ENCODE measurements at regions of chr2 and their contacts with region 1.

Region 1: DNA sequence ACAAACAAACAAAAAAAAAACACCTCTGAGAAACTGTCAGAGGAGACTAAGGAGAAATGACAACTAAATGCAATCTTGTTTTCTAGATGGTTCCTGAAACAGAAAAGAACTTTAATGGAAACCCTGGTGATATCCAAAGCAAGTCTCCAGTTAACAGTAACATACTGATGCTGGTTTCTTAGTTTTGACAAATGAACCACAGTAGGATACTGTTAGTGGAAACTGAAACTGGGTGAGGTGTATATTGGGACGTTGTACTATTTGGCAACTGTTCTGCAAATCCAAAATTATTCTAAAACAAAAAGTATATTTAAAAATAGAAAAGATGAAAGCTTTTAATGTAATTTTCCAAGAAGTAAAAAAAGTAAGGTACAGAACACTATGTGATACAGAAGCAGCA is 11.4 kb downstream of the SESTD1 start:
- DNase-seq: peak; percentile 33
- ATAC-seq: peak; percentile 53
- H3K4me3 ChIP-seq: peak overlapping the region in 2 of 5 experiments; percentile 15 to 45
- H3K4me3 Mint-ChIP-seq: peak overlapping the region; percentile 70
- H3K27ac ChIP-seq: peak overlapping the region; percentile 62 to 84
- H3K27ac Mint-ChIP-seq: peak overlapping the region; percentile 85
- H3K4me1 ChIP-seq: peaks cover 67 to 80% of the 10 kb centered on the region in 2 donors
- H3K4me1 Mint-ChIP-seq: peaks cover 77% of the 10 kb centered on the region
- H3K27me3 ChIP-seq: no peaks in the 10 kb centered on the region
- H3K27me3 Mint-ChIP-seq: no peaks in the 10 kb centered on the region
- CTCF ChIP-seq: no peak

Region 2: DNA sequence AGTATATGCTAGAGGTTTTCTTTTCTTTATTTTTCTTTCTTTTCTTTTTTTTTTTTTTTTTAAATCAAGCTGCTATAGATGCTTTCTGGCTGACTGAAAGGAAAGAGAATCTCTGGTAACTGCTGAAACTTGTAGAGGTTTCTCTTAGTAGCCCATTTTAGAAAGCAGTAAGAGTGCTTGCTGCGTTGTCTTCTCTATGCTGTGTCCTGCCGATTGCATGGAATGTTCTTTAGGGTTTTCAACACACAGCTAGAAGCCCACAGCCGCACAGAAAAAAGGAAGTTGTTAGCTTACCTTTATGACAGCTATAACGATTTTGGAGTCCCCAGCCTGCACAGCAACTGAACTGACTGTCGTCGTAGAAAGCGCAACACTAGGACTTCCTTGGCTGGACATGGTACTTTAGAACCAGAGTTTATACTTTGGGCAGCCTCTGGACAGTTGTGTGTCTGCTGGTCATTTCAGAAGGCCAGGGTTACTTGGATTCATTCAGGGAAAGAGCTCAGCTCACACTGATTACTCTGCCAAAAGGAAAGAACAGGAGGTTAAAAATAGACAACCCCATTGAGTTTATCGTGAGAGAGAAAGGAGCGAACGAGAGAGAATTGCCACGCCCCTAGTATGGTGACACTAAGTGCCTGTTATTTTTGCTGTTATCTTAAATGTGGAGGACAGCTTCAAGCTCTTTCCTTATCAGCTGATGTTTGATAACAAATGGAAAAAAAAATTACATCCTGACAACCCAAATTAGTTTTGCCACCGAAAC is 203.5 kb before region 1 on chr2 and contains the start of gene CCDC141:
- CTCF ChIA-PET with region 1: no interaction called
- POLR2A ChIA-PET with region 1: no interaction called
- intact Hi-C with region 1: loop called (anchors 10 kb)
- DNase-seq: peak; percentile 72
- ATAC-seq: peak; percentile 82
- H3K4me3 ChIP-seq: peak within 1 kb of the TSS; percentile 46 to 83 (median 70)
- H3K4me3 Mint-ChIP-seq: peak within 1 kb of the TSS; percentile 94
- H3K27ac ChIP-seq: peak within 1 kb of the TSS; percentile 81 to 82
- H3K27ac Mint-ChIP-seq: peak within 1 kb of the TSS; percentile 95
- H3K4me1 ChIP-seq: peaks cover 38 to 44% of the 10 kb centered on the region in 2 donors
- H3K4me1 Mint-ChIP-seq: peaks cover 56% of the 10 kb centered on the region
- H3K27me3 ChIP-seq: no peaks in the 10 kb centered on the region
- H3K27me3 Mint-ChIP-seq: no peaks in the 10 kb centered on the region
- CTCF ChIP-seq: no peak
- total RNA-seq, gene CCDC141: 42.1 and 47.5 TPM in 2 replicates

Region 3: GRCh38 chr2:179233083-179233490 is 20.1 kb before region 1 on chr2:
- CTCF ChIA-PET with region 1: no interaction called
- POLR2A ChIA-PET with region 1: no interaction called
- intact Hi-C with region 1: loop called (anchors 2 kb)
- DNase-seq: peak; percentile 0
- ATAC-seq: no peak
- H3K4me3 ChIP-seq: no peak overlapping the region
- H3K4me3 Mint-ChIP-seq: no peak overlapping the region
- H3K27ac ChIP-seq: no peak overlapping the region
- H3K27ac Mint-ChIP-seq: no peak overlapping the region
- H3K4me1 ChIP-seq: peaks cover 9 to 18% of the 10 kb centered on the region in 2 donors
- H3K4me1 Mint-ChIP-seq: peaks cover 53% of the 10 kb centered on the region
- H3K27me3 ChIP-seq: no peaks in the 10 kb centered on the region
- H3K27me3 Mint-ChIP-seq: no peaks in the 10 kb centered on the region
- CTCF ChIP-seq: no peak

Region 4: GRCh38 chr2:179264368-179265081 is 11.3 kb after region 1 on chr2 and contains the start of gene SESTD1:
- CTCF ChIA-PET with region 1: interaction called, 4 read pairs
- POLR2A ChIA-PET with region 1: interaction called, 7 read pairs
- intact Hi-C with region 1: loop called (anchors 1 kb)
- DNase-seq: peak; percentile 83
- ATAC-seq: peak; percentile 79
- H3K4me3 ChIP-seq: peak within 1 kb of the TSS; percentile 62 to 96 (median 80)
- H3K4me3 Mint-ChIP-seq: peak within 1 kb of the TSS; percentile 92
- H3K27ac ChIP-seq: peak within 1 kb of the TSS; percentile 54 to 87
- H3K27ac Mint-ChIP-seq: peak within 1 kb of the TSS; percentile 91
- H3K4me1 ChIP-seq: peaks cover 24 to 45% of the 10 kb centered on the region in 2 donors
- H3K4me1 Mint-ChIP-seq: peaks cover 51% of the 10 kb centered on the region
- H3K27me3 ChIP-seq: no peaks in the 10 kb centered on the region
- H3K27me3 Mint-ChIP-seq: no peaks in the 10 kb centered on the region
- CTCF ChIP-seq: no peak
- total RNA-seq, gene SESTD1: 66.1 and 71.9 TPM in 2 replicates